ENCODE measurements at regions of chr5 and their contacts with region 1.

Region 1: GRCh38 chr5:163564321-163564938 is 59.0 kb downstream of the MAT2B start:
- DNase-seq: peak; percentile 48 to 69
- H3K4me3 ChIP-seq: no peak overlapping the region
- H3K4me3 Mint-ChIP-seq: no peak overlapping the region
- H3K27ac Mint-ChIP-seq: no peak overlapping the region
- H3K4me1 ChIP-seq: 0 out of 2 replicates have a peak, but pooled peaks cover 3% of the 10 kb centered on the region
- H3K4me1 Mint-ChIP-seq: peaks cover 8% of the 10 kb centered on the region
- H3K27me3 ChIP-seq: peaks cover 2% of the 10 kb centered on the region; the same call in 1 of the 2 replicates
- H3K27me3 Mint-ChIP-seq: peaks cover 20% of the 10 kb centered on the region
- CTCF ChIP-seq: peak; percentile 82 to 85

Region 2: DNA sequence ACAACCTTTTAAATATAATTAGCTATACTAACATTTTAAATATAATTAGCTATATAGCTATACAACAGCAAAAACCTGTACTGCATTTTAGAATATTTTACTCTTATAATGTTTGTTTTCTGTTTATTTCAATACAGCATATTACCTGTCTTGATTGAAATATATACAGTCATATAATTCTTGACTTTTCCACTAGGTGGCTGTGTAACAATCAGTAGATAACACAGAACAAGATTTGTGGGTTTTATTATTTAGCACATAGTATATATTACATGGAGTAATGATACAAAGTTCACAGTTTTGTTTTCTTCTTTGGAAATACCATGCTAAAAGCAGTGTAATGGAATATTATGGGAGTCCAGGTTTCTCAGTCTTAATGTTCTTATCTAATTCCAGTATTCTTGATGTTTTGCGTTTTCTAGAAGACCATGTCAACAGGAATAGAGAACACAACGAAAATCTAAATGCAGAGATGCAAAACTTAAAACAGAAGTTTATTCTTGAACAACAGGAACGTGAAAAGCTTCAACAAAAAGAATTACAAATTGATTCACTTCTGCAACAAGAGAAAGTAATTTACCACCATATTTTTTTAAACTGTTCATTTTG is 90.7 kb before region 1 on chr5:
- CTCF ChIA-PET with region 1: no interaction called
- POLR2A ChIA-PET with region 1: no interaction called
- intact Hi-C with region 1: no loop called
- DNase-seq: no peak
- H3K4me3 ChIP-seq: no peak overlapping the region
- H3K4me3 Mint-ChIP-seq: no peak overlapping the region
- H3K27ac Mint-ChIP-seq: no peak overlapping the region
- H3K4me1 ChIP-seq: no peaks in the 10 kb centered on the region
- H3K4me1 Mint-ChIP-seq: no peaks in the 10 kb centered on the region
- H3K27me3 ChIP-seq: no peaks in the 10 kb centered on the region
- H3K27me3 Mint-ChIP-seq: no peaks in the 10 kb centered on the region
- CTCF ChIP-seq: peak in 1 of 2 experiments; percentile 35

Region 3: DNA sequence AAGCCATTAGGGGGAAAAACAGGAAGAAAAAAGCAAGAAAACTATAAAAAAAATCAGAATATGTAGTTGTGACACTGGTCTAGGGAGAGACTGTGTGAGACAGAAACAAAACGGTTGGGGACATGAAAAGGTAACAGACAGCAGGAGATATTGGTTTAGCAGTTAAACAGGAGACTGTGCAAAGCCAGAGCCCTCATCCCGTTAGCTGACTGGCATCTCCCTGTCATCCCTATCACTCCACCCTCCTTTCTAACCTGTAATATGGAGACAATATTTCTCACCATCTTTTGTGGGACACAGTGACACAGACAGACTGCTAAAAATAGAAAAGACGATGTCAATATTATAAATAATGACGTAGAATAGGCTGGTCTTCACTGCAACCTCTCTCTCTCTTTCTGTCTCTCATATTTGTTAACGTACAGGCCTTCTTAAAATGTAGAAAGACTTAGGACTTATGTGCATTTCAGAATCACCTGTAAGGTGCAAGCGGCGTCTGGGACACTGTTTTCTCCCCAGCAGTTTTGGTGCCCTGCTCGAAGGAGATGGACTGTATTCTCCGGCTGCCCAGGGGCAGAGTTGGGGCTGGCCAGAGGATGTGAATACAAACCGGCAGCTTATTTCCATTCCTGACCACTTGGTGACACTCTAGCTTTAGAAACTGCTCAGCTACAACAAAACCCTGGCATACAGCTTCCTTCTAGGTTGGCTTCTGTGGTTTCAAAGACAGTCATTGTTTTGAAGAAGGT is 131.6 kb after region 1 on chr5:
- CTCF ChIA-PET with region 1: interaction called, 6 read pairs
- POLR2A ChIA-PET with region 1: no interaction called
- intact Hi-C with region 1: loop called (anchors 1 kb)
- DNase-seq: peak; percentile 38 to 52
- H3K4me3 ChIP-seq: no peak overlapping the region
- H3K4me3 Mint-ChIP-seq: no peak overlapping the region
- H3K27ac Mint-ChIP-seq: no peak overlapping the region
- H3K4me1 ChIP-seq: no peaks in the 10 kb centered on the region
- H3K4me1 Mint-ChIP-seq: no peaks in the 10 kb centered on the region
- H3K27me3 ChIP-seq: no peaks in the 10 kb centered on the region
- H3K27me3 Mint-ChIP-seq: peaks cover 5% of the 10 kb centered on the region
- CTCF ChIP-seq: peak in 1 of 2 experiments; percentile 66

Region 4: GRCh38 chr5:163821142-163821541 is 256.7 kb after region 1 on chr5:
- CTCF ChIA-PET with region 1: no interaction called
- POLR2A ChIA-PET with region 1: no interaction called
- intact Hi-C with region 1: loop called (anchors 10 kb)
- DNase-seq: no peak
- H3K4me3 ChIP-seq: no peak overlapping the region
- H3K4me3 Mint-ChIP-seq: no peak overlapping the region
- H3K27ac Mint-ChIP-seq: no peak overlapping the region
- H3K4me1 ChIP-seq: no peaks in the 10 kb centered on the region
- H3K4me1 Mint-ChIP-seq: no peaks in the 10 kb centered on the region
- H3K27me3 ChIP-seq: no peaks in the 10 kb centered on the region
- H3K27me3 Mint-ChIP-seq: peaks cover 3% of the 10 kb centered on the region
- CTCF ChIP-seq: no peak

Region 5: GRCh38 chr5:164475339-164475977 is 911.0 kb after region 1 on chr5:
- CTCF ChIA-PET with region 1: no interaction called
- POLR2A ChIA-PET with region 1: no interaction called
- intact Hi-C with region 1: loop called (anchors 1 kb)
- DNase-seq: peak in 1 of 2 experiments; percentile 19
- H3K4me3 ChIP-seq: no peak overlapping the region
- H3K4me3 Mint-ChIP-seq: no peak overlapping the region
- H3K27ac Mint-ChIP-seq: no peak overlapping the region
- H3K4me1 ChIP-seq: no peaks in the 10 kb centered on the region
- H3K4me1 Mint-ChIP-seq: no peaks in the 10 kb centered on the region
- H3K27me3 ChIP-seq: no peaks in the 10 kb centered on the region
- H3K27me3 Mint-ChIP-seq: peaks cover 4% of the 10 kb centered on the region
- CTCF ChIP-seq: peak; percentile 40 to 56

Region 6: GRCh38 chr5:164504141-164504772 is 939.8 kb after region 1 on chr5:
- CTCF ChIA-PET with region 1: no interaction called
- POLR2A ChIA-PET with region 1: no interaction called
- intact Hi-C with region 1: loop called (anchors 1 kb)
- DNase-seq: peak in 1 of 2 experiments; percentile 56
- H3K4me3 ChIP-seq: no peak overlapping the region
- H3K4me3 Mint-ChIP-seq: no peak overlapping the region
- H3K27ac Mint-ChIP-seq: no peak overlapping the region
- H3K4me1 ChIP-seq: no peaks in the 10 kb centered on the region
- H3K4me1 Mint-ChIP-seq: no peaks in the 10 kb centered on the region
- H3K27me3 ChIP-seq: no peaks in the 10 kb centered on the region
- H3K27me3 Mint-ChIP-seq: peaks cover 4% of the 10 kb centered on the region
- CTCF ChIP-seq: peak; percentile 70 to 79

Region 7: GRCh38 chr5:165209086-165209727 is 1644.8 kb after region 1 on chr5:
- CTCF ChIA-PET with region 1: no interaction called
- POLR2A ChIA-PET with region 1: no interaction called
- intact Hi-C with region 1: loop called (anchors 2 kb)
- DNase-seq: peak in 1 of 2 experiments; percentile 41
- H3K4me3 ChIP-seq: no peak overlapping the region
- H3K4me3 Mint-ChIP-seq: no peak overlapping the region
- H3K27ac Mint-ChIP-seq: no peak overlapping the region
- H3K4me1 ChIP-seq: peaks cover 5% of the 10 kb centered on the region; the same call in 1 of the 2 replicates
- H3K4me1 Mint-ChIP-seq: no peaks in the 10 kb centered on the region
- H3K27me3 ChIP-seq: no peaks in the 10 kb centered on the region
- H3K27me3 Mint-ChIP-seq: no peaks in the 10 kb centered on the region
- CTCF ChIP-seq: peak; percentile 27 to 61